ENCODE measurements at regions of chr19 and their contacts with region 1.

Region 1: GRCh38 chr19:24086974-24087595 is at the start of gene ZNF254:
- DNase-seq: peak; percentile 49 to 86 (median 74)
- ATAC-seq: peak; percentile 93 to 99 (median 98)
- H3K4me3 ChIP-seq: peak within 1 kb of the TSS; percentile 82 to 86
- H3K4me3 Mint-ChIP-seq: peak within 1 kb of the TSS; percentile 89 to 94 (median 92)
- H3K27ac ChIP-seq: peak within 1 kb of the TSS; percentile 80
- H3K27ac Mint-ChIP-seq: peak within 1 kb of the TSS; percentile 93 to 96
- H3K4me1 ChIP-seq: peaks cover 2 to 24% of the 10 kb centered on the region in 2 experiments
- H3K4me1 Mint-ChIP-seq: peaks cover 0 to 17% (median 14%) of the 10 kb centered on the region in 3 donors
- H3K27me3 ChIP-seq: no peaks in the 10 kb centered on the region
- H3K27me3 Mint-ChIP-seq: no peaks in the 10 kb centered on the region
- total RNA-seq, gene ZNF254: 9.8 to 15.4 (median 13.8) TPM

Region 2: GRCh38 chr19:24062190-24062589 is 24.9 kb before region 1 on chr19:
- CTCF ChIA-PET with region 1: no interaction called
- POLR2A ChIA-PET with region 1: no interaction called
- DNase-seq: no peak
- ATAC-seq: peak in 1 of 4 experiments; percentile 26
- H3K4me3 ChIP-seq: no peak overlapping the region
- H3K4me3 Mint-ChIP-seq: no peak overlapping the region
- H3K27ac ChIP-seq: no peak overlapping the region
- H3K27ac Mint-ChIP-seq: no peak overlapping the region
- H3K4me1 ChIP-seq: no peaks in the 10 kb centered on the region
- H3K4me1 Mint-ChIP-seq: no peaks in the 10 kb centered on the region
- H3K27me3 ChIP-seq: no peaks in the 10 kb centered on the region
- H3K27me3 Mint-ChIP-seq: no peaks in the 10 kb centered on the region

Region 3: GRCh38 chr19:24159707-24160106 is 72.6 kb after region 1 on chr19:
- CTCF ChIA-PET with region 1: no interaction called
- POLR2A ChIA-PET with region 1: interaction called in 1 of 2 experiments, 11 read pairs
- DNase-seq: no peak
- ATAC-seq: no peak
- H3K4me3 ChIP-seq: no peak overlapping the region
- H3K4me3 Mint-ChIP-seq: no peak overlapping the region
- H3K27ac ChIP-seq: no peak overlapping the region
- H3K27ac Mint-ChIP-seq: no peak overlapping the region
- H3K4me1 ChIP-seq: no peaks in the 10 kb centered on the region
- H3K4me1 Mint-ChIP-seq: no peaks in the 10 kb centered on the region
- H3K27me3 ChIP-seq: no peaks in the 10 kb centered on the region
- H3K27me3 Mint-ChIP-seq: no peaks in the 10 kb centered on the region